Ascending aorta (tissue), 2 donors: ENCODE measurements at regions of chr10 and their contacts with region 1.

Region 1: GRCh38 chr10:97037365-97038361 is 148.1 kb downstream of the SLIT1 start:
- DNase-seq: peak in 1 of 2 donors; percentile 87
- H3K4me3 ChIP-seq: peak overlapping the region; percentile 44 to 63
- H3K27ac ChIP-seq: no peak overlapping the region
- H3K4me1 ChIP-seq: no peaks in the 10 kb centered on the region
- H3K27me3 ChIP-seq: no peaks in the 10 kb centered on the region
- CTCF ChIP-seq: peak; percentile 78 to 90 (median 87)

Region 2: DNA sequence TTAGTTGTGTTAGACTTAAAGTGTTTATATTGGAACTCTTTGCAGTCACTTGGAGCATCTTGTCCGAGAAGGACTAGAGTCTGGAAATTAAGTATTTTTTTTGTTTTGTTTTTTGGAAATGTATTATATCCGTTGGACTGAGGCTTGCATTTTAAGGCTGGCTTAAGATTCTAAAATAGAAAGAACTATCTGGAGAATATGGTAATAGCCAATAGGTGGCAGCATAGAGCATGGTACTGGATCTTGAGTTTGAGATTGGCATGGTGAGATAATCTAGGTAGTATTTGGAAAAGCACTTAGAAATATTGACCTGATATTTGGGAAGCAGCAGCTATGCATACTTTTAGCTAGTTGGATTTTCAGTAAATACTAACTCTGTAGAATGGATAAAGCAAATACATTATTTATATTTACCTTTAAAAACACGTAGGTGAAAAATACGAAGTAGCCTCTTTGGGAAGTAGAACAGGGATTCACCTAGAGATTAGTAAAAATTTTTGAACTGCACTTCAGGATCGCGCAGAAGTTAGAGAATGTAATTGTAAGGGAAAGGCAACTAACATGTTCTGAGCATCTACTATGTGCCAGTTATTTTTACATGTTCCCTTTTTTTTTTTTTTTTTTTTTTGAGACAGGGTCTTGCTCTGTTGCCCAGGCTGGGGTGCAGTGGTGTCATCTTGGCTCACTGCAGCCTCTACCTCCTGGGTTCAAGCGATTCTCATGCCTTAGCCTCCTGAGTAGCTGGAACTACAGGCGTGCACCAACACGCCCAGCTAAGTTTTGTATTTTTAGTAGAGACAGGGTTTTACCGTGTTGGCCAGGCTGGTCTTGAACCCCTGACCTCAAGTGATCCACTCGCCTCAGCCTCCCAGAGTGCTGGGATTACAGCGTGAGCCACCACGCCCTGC is 126.9 kb before region 1 on chr10:
- intact Hi-C with region 1: loop called (anchors 5 kb)
- DNase-seq: no peak
- H3K4me3 ChIP-seq: no peak overlapping the region
- H3K27ac ChIP-seq: peak overlapping the region in 1 of 2 donors; percentile 23
- H3K4me1 ChIP-seq: peaks cover 2 to 8% of the 10 kb centered on the region in 2 donors
- H3K27me3 ChIP-seq: no peaks in the 10 kb centered on the region
- CTCF ChIP-seq: peak; percentile 25 to 57 (median 55)

Region 3: DNA sequence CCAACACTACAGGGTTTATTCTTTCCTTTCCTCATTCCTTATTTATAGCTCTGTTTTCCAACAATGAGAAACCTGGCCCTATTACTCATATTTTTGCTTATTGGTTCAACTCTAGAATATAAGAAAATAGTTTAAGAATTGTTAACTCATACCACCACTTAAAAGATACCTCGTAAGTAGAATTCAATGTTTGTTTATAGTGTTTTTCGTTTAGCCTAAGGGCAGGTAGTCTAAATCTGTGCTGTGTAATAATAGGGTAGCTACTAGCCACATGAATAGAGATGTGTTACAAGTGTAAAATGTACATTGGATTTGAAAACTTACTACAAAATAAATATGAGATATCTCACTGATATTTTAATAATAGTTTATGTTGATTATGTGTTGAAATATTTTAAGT is 1122.4 kb after region 1 on chr10:
- intact Hi-C with region 1: no loop called
- DNase-seq: no peak
- H3K4me3 ChIP-seq: no peak overlapping the region
- H3K27ac ChIP-seq: no peak overlapping the region
- H3K4me1 ChIP-seq: no peaks in the 10 kb centered on the region
- H3K27me3 ChIP-seq: no peaks in the 10 kb centered on the region
- CTCF ChIP-seq: no peak